H1 (cell line): ENCODE measurements at regions of chr12 and their contacts with region 1.

Region 1: DNA sequence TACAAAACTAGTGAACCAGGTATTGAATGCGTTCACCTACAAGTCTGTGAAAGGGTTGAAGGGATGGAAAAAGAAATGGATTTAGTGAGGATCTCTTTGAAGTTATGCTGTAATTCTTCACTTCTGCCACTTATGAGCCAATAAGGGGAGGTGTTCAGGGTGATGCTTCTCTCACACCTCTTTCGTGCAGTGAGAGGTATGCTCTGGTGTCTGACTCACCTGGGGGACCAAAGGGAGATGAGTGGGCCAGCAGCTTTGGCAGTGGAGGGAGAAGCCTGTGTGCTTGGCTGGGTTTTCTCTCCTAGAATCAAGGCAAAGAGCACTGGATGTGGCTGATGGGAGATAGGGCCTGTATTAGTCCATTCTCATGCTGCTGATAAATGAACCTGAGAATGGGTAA is 45.4 kb downstream of the E2F7 start:
- DNase-seq: no peak
- H3K4me3 ChIP-seq: no peak overlapping the region
- H3K27ac ChIP-seq: no peak overlapping the region
- H3K4me1 ChIP-seq: no peaks in the 10 kb centered on the region; a peak in 1 of 7 replicates
- H3K27me3 ChIP-seq: no peaks in the 10 kb centered on the region
- CTCF ChIP-seq: no peak
- EP300 ChIP-seq: no peak
- POLR2A ChIP-seq: no peak
- RAD21 ChIP-seq: no peak

Region 2: DNA sequence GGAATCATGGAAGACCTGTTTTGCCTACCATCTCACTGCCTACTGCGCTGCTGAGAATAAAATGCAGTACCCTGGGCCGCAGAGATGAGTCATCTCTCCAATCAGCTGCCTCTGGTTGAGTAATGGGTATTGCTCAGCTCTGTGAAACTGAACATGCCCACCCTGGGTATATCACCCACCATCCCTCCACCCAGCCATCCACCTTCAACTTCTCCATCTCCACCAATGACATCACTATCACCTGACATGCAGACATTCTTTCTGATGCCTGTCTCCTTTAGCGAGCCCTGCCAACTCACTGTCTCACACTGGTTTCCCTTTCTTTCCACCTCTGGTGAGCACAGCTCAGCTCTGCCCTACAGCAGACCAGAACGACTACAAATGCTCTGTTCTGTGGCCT is 11.8 kb after region 1 on chr12:
- CTCF ChIA-PET with region 1: no interaction called
- POLR2A ChIA-PET with region 1: interaction called, 12 read pairs
- DNase-seq: no peak
- H3K4me3 ChIP-seq: no peak overlapping the region
- H3K27ac ChIP-seq: no peak overlapping the region
- H3K4me1 ChIP-seq: no peaks in the 10 kb centered on the region
- H3K27me3 ChIP-seq: no peaks in the 10 kb centered on the region
- CTCF ChIP-seq: no peak
- EP300 ChIP-seq: no peak
- POLR2A ChIP-seq: no peak
- RAD21 ChIP-seq: no peak